Common myeloid progenitor, CD34-positive (primary cell): ENCODE measurements at regions of chr1 and their contacts with region 1.

Region 1: GRCh38 chr1:111507411-111508201 is 4.2 kb upstream of the ADORA3 start:
- DNase-seq: peak; percentile 89 to 97 (median 96)
- H3K4me3 ChIP-seq: peak overlapping the region in 6 of 7 experiments; percentile 35 to 72 (median 64)
- H3K27ac ChIP-seq: peak overlapping the region; percentile 84 to 93
- H3K4me1 ChIP-seq: peaks cover 37 to 97% (median 91%) of the 10 kb centered on the region in 4 experiments
- H3K27me3 ChIP-seq: no peaks in the 10 kb centered on the region

Region 2: GRCh38 chr1:111481387-111482221 is 26.0 kb before region 1 on chr1:
- CTCF ChIA-PET with region 1: interaction called, 151 read pairs
- POLR2A ChIA-PET with region 1: interaction called, 7 read pairs
- DNase-seq: peak; percentile 78 to 79 (median 79)
- H3K4me3 ChIP-seq: no peak overlapping the region
- H3K27ac ChIP-seq: no peak overlapping the region
- H3K4me1 ChIP-seq: peaks cover 17 to 36% (median 26%) of the 10 kb centered on the region in 4 experiments
- H3K27me3 ChIP-seq: no peaks in the 10 kb centered on the region

Region 3: DNA sequence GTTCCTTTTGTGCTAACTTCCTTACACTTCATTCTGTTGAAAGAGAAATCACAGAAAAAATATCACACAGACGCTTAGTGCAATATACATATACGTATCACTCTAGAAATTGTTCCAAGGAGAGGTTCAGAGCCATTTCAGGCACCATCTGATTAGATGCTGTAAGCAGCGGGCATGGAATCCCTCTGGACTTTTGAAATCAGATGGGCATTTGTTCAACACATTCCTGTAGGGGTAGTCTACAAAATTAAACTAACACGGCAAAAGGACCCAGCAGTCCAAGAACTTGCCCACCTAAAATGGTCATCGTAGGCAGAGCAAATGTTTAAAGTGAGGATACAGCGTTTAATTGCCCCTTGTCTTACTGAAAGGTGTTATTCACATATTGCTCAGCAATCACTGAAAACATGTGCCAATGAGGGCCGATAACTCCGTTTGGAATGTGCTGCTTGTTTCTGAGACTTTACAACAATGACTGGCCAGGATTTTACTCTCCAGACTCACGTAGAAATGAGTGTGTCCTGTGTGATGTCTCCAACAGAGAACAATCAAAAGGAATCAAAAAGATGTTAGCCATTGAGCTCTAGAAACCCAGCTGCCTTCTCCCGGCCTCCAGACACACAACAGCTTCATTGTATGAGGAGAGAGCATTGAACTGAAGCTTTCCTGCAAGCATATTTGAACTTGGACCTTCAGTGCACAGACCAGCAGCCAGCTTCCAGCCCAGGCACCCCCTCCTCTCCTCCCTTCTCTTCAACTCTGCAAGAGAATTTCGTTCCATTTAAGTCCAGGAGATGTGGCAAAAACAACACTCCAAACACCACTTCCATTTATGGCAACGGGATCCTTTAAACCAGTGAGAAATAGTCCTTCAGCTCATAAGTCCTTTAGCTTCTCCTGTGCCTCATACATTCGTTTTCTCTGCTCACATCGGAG is 27.9 kb after region 1 on chr1:
- CTCF ChIA-PET with region 1: interaction called, 12 read pairs
- POLR2A ChIA-PET with region 1: no interaction called
- DNase-seq: no peak
- H3K4me3 ChIP-seq: no peak overlapping the region
- H3K27ac ChIP-seq: no peak overlapping the region
- H3K4me1 ChIP-seq: no peaks in the 10 kb centered on the region
- H3K27me3 ChIP-seq: no peaks in the 10 kb centered on the region

Region 4: DNA sequence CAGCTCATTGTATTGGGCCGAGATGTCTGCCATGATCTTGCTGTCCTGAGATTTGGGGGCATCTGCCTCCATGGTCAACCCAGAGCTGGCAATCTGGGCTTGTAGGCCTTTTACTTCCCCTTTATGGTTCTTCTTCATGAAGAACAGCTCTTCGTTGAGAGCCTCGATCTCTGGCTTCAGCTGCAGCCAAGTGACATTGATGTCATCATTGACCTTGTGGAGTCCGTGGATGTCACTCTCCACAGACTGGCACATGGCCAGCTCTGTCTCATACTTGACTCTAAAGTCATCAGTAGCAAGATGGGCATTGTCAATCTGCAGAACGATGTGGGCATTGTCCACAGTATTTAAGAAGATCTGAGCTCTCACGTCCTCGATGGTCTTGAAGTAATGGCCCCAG is 141.2 kb after region 1 on chr1:
- CTCF ChIA-PET with region 1: interaction called, 30 read pairs
- POLR2A ChIA-PET with region 1: interaction called, 3 read pairs
- DNase-seq: peak in 1 of 3 donors; percentile 23
- H3K4me3 ChIP-seq: no peak overlapping the region
- H3K27ac ChIP-seq: no peak overlapping the region
- H3K4me1 ChIP-seq: peaks cover under 1 to 4% (median 4%) of the 10 kb centered on the region in 4 experiments
- H3K27me3 ChIP-seq: no peaks in the 10 kb centered on the region

Region 5: GRCh38 chr1:111672331-111672730 is 164.7 kb after region 1 on chr1:
- CTCF ChIA-PET with region 1: interaction called, 15 read pairs
- POLR2A ChIA-PET with region 1: no interaction called
- DNase-seq: no peak
- H3K4me3 ChIP-seq: no peak overlapping the region
- H3K27ac ChIP-seq: no peak overlapping the region
- H3K4me1 ChIP-seq: peaks cover 8 to 18% (median 10%) of the 10 kb centered on the region in 4 experiments
- H3K27me3 ChIP-seq: no peaks in the 10 kb centered on the region

Region 6: DNA sequence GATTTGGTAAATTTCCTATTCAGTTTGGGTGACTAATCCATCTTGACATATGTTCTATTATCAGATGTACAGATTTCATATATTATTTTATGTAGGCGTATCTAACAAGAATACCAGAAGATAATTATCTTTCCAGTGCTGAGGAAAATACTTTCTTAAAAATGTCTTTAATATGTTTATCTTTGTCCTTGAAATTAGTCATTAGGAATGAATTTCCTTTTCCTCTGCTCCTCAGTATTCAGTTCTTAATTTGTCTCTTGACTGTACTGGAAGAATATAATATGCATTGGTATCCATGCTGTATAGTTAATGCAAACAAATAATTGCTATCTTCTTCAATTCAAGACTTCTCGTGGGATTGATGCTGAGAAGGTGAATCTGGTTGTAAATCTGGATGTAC is 254.7 kb after region 1 on chr1:
- CTCF ChIA-PET with region 1: interaction called, 11 read pairs
- POLR2A ChIA-PET with region 1: no interaction called
- DNase-seq: no peak
- H3K4me3 ChIP-seq: no peak overlapping the region
- H3K27ac ChIP-seq: no peak overlapping the region
- H3K4me1 ChIP-seq: peaks cover 0 to 3% (median under 1%) of the 10 kb centered on the region in 4 experiments
- H3K27me3 ChIP-seq: no peaks in the 10 kb centered on the region